A549 (cell line): ENCODE measurements at regions of chr20 and their contacts with region 1.

Region 1: GRCh38 chr20:6583134-6583738 is 184.2 kb upstream of the BMP2 start:
- DNase-seq: peak; percentile 37 to 45
- ATAC-seq: peak; percentile 70 to 89; a peak in 5 of 6 replicates
- H3K4me3 ChIP-seq: no peak overlapping the region
- H3K27ac ChIP-seq: no peak overlapping the region
- H3K4me1 ChIP-seq: no peaks in the 10 kb centered on the region
- CTCF ChIP-seq: peak; percentile 57
- EP300 ChIP-seq: no peak
- POLR2A ChIP-seq: no peak
- RAD21 ChIP-seq: peak; percentile 51 to 68; a peak in 4 of 5 replicates

Region 2: GRCh38 chr20:6492271-6493055 is 90.8 kb before region 1 on chr20:
- CTCF ChIA-PET with region 1: no interaction called
- POLR2A ChIA-PET with region 1: no interaction called
- DNase-seq: no peak
- ATAC-seq: no peak
- H3K4me3 ChIP-seq: no peak overlapping the region
- H3K27ac ChIP-seq: no peak overlapping the region
- H3K4me1 ChIP-seq: no peaks in the 10 kb centered on the region
- CTCF ChIP-seq: no peak
- EP300 ChIP-seq: no peak
- POLR2A ChIP-seq: no peak
- RAD21 ChIP-seq: no peak

Region 3: DNA sequence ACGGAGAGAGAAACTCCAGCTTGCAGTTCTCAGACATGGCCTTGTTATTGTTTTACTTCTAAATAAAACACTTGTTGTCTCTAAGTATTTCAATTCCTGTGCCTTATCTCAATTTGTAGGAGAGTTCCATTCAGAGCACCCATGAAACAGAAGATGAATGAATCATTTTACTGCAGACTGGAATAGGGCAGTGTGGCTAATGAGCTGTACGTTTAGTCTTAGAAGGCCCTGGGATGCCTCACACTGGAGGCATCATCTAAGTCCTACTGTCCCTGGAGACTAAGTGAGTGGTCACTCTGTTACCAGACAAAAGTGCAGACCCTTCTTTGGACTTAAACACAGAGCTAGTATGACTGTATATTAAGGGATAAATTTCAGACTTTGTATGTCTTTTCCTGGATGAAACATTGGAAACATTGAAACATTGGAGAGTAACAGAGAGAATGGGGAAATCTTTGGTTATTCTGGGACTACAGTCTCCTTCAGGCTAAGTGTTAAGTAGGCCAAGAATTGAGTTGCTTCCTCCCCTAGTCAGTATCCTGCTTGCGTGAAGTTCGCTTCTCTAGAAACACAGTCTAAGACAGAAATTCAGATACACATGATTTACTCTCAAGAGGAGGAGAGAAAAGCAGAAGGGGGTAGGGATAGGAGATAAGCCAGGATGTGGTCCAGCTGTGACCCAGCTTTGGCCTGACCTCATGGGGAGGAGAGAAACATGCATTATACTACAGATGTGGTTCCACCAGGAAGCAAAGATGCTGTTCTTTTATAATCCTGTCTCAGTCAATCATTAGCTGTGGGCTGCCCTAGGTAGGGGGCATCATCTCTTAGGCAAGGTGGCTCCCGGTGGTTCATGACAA is 16.9 kb after region 1 on chr20:
- CTCF ChIA-PET with region 1: interaction called, 15 read pairs
- POLR2A ChIA-PET with region 1: no interaction called
- DNase-seq: no peak
- ATAC-seq: no peak
- H3K4me3 ChIP-seq: no peak overlapping the region
- H3K27ac ChIP-seq: no peak overlapping the region
- H3K4me1 ChIP-seq: no peaks in the 10 kb centered on the region
- CTCF ChIP-seq: no peak
- EP300 ChIP-seq: no peak
- POLR2A ChIP-seq: no peak
- RAD21 ChIP-seq: no peak

Region 4: GRCh38 chr20:6663104-6663503 is 79.9 kb after region 1 on chr20:
- CTCF ChIA-PET with region 1: no interaction called
- POLR2A ChIA-PET with region 1: no interaction called
- DNase-seq: no peak
- ATAC-seq: no peak
- H3K4me3 ChIP-seq: no peak overlapping the region
- H3K27ac ChIP-seq: no peak overlapping the region
- H3K4me1 ChIP-seq: no peaks in the 10 kb centered on the region
- CTCF ChIP-seq: no peak
- EP300 ChIP-seq: no peak
- POLR2A ChIP-seq: no peak
- RAD21 ChIP-seq: no peak